Breast epithelium (tissue), 4 donors: ENCODE measurements at regions of chr1 and their contacts with region 1.

Region 1: GRCh38 chr1:216306830-216307229 is 116.4 kb downstream of the USH2A start:
- DNase-seq: no peak
- H3K4me3 ChIP-seq: no peak overlapping the region
- H3K27ac ChIP-seq: no peak overlapping the region
- H3K4me1 ChIP-seq: no peaks in the 10 kb centered on the region
- H3K27me3 ChIP-seq: no peaks in the 10 kb centered on the region
- CTCF ChIP-seq: no peak
- POLR2A ChIP-seq: no peak

Region 2: GRCh38 chr1:214791961-214792360 is 1514.9 kb before region 1 on chr1:
- intact Hi-C with region 1: loop called (anchors 10 kb)
- DNase-seq: no peak
- H3K4me3 ChIP-seq: no peak overlapping the region
- H3K27ac ChIP-seq: no peak overlapping the region
- H3K4me1 ChIP-seq: no peaks in the 10 kb centered on the region
- H3K27me3 ChIP-seq: no peaks in the 10 kb centered on the region
- CTCF ChIP-seq: no peak
- POLR2A ChIP-seq: no peak